ENCODE measurements at regions of chr19 and their contacts with region 1.

Region 1: GRCh38 chr19:19554074-19555023 is 16.3 kb downstream of the CILP2 start:
- DNase-seq: peak in 7 of 9 experiments; percentile 45 to 76 (median 64)
- ATAC-seq: peak; percentile 60
- H3K4me3 ChIP-seq: no peak overlapping the region
- H3K4me3 Mint-ChIP-seq: no peak overlapping the region
- H3K27ac ChIP-seq: no peak overlapping the region
- H3K27ac Mint-ChIP-seq: no peak overlapping the region
- H3K4me1 ChIP-seq: no peaks in the 10 kb centered on the region
- H3K4me1 Mint-ChIP-seq: peaks cover 4% of the 10 kb centered on the region
- H3K27me3 ChIP-seq: no peaks in the 10 kb centered on the region
- H3K27me3 Mint-ChIP-seq: peaks cover 5% of the 10 kb centered on the region
- CTCF ChIP-seq: peak; percentile 84

Region 2: GRCh38 chr19:18919086-18919899 is 635.1 kb before region 1 on chr19 and contains the starts of genes COPE and DDX49:
- CTCF ChIA-PET with region 1: no interaction called
- POLR2A ChIA-PET with region 1: no interaction called
- intact Hi-C with region 1: no loop called
- DNase-seq: peak; percentile 92 to 100 (median 98)
- ATAC-seq: peak; percentile 93
- H3K4me3 ChIP-seq: peak within 1 kb of the TSS; percentile 92 to 94
- H3K4me3 Mint-ChIP-seq: peak within 1 kb of the TSS; percentile 93
- H3K27ac ChIP-seq: peak within 1 kb of the TSS; percentile 96 to 97
- H3K27ac Mint-ChIP-seq: peak within 1 kb of the TSS; percentile 94
- H3K4me1 ChIP-seq: peaks cover 30% of the 10 kb centered on the region
- H3K4me1 Mint-ChIP-seq: peaks cover 43% of the 10 kb centered on the region
- H3K27me3 ChIP-seq: no peaks in the 10 kb centered on the region
- H3K27me3 Mint-ChIP-seq: no peaks in the 10 kb centered on the region
- CTCF ChIP-seq: no peak
- total RNA-seq, gene COPE: 207 to 211 TPM
- total RNA-seq, gene DDX49: 67.1 to 72.8 TPM

Region 3: GRCh38 chr19:19423322-19423721 is 131.0 kb before region 1 on chr19:
- CTCF ChIA-PET with region 1: no interaction called
- POLR2A ChIA-PET with region 1: no interaction called
- intact Hi-C with region 1: no loop called
- DNase-seq: no peak
- ATAC-seq: no peak
- H3K4me3 ChIP-seq: no peak overlapping the region
- H3K4me3 Mint-ChIP-seq: no peak overlapping the region
- H3K27ac ChIP-seq: peak overlapping the region in 1 of 2 experiments; percentile 14
- H3K27ac Mint-ChIP-seq: peak overlapping the region; percentile 79
- H3K4me1 ChIP-seq: peaks cover 63% of the 10 kb centered on the region
- H3K4me1 Mint-ChIP-seq: peaks cover 88% of the 10 kb centered on the region
- H3K27me3 ChIP-seq: no peaks in the 10 kb centered on the region
- H3K27me3 Mint-ChIP-seq: no peaks in the 10 kb centered on the region
- CTCF ChIP-seq: no peak

Region 4: GRCh38 chr19:19540715-19541440 is 13.5 kb before region 1 on chr19:
- CTCF ChIA-PET with region 1: interaction called, 10 read pairs
- POLR2A ChIA-PET with region 1: no interaction called
- intact Hi-C with region 1: no loop called
- DNase-seq: peak; percentile 46 to 82 (median 76)
- ATAC-seq: peak; percentile 76
- H3K4me3 ChIP-seq: peak overlapping the region; percentile 32 to 58
- H3K4me3 Mint-ChIP-seq: peak overlapping the region; percentile 69
- H3K27ac ChIP-seq: no peak overlapping the region
- H3K27ac Mint-ChIP-seq: peak overlapping the region; percentile 18
- H3K4me1 ChIP-seq: peaks cover 39% of the 10 kb centered on the region
- H3K4me1 Mint-ChIP-seq: peaks cover 27% of the 10 kb centered on the region
- H3K27me3 ChIP-seq: peaks cover 0 to 2% of the 10 kb centered on the region in 2 experiments
- H3K27me3 Mint-ChIP-seq: no peaks in the 10 kb centered on the region
- CTCF ChIP-seq: no peak

Region 5: DNA sequence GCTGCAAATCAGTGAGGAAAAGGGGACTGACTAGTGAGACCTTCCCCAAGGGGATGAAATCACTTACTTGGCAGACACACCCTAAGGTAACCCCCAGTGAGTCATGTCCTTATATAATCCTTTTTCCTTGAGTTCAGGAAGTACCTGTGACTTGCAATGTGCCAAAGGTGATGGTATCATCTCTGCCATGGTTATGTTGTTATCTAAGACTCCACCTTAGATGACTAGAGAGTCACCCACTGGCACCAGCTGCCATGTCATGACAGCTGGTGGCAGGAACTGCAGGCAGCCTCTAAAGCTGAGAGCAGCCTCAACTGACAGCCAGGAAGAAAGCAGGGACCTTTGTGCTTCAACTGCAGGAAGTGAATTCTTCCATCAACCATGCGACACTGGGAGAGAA is 51.7 kb after region 1 on chr19:
- CTCF ChIA-PET with region 1: interaction called, 10 read pairs
- POLR2A ChIA-PET with region 1: no interaction called
- intact Hi-C with region 1: no loop called
- DNase-seq: peak in 7 of 9 experiments; percentile 39 to 79 (median 65)
- ATAC-seq: peak; percentile 86
- H3K4me3 ChIP-seq: no peak overlapping the region
- H3K4me3 Mint-ChIP-seq: peak overlapping the region; percentile 57
- H3K27ac ChIP-seq: peak overlapping the region; percentile 9 to 53
- H3K27ac Mint-ChIP-seq: peak overlapping the region; percentile 94
- H3K4me1 ChIP-seq: peaks cover 44% of the 10 kb centered on the region
- H3K4me1 Mint-ChIP-seq: peaks cover 66% of the 10 kb centered on the region
- H3K27me3 ChIP-seq: no peaks in the 10 kb centered on the region
- H3K27me3 Mint-ChIP-seq: no peaks in the 10 kb centered on the region
- CTCF ChIP-seq: no peak